ENCODE measurements at regions of chr2 and their contacts with region 1.

Region 1: DNA sequence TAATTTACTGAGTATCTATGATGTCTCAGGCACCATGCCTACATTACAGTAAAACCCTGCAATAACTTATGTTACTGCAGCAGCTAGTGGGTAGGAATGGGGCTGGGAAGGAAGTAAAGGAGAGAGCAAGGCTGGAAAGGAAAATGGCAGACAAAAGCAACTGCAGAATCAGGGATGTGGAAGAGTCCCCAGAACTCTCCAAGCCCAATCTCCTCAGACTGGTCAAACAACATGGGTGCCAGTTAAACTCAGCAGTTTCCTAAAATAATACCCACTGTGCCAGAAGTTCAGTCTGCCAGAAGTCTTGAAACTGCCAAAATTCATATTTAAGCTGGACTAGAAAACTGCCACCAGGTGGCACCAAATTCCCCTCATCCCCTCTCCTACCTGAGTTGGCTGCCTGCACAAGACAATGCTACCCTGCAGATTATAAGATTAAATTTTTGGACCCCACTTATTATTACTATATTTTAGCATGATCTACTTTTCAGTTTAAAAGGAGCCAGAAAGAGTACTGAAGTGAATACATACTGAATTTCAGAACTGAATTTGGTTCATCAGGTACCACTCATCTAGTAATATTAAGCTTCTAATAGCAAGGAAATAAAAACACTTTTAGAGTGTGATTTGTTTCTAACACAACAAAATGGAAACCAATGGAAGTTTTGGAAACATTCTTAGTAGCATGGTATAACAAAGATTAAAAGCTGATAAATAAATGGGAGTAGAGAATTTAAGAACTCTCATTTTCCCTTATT is 86.8 kb upstream of the DNER start:
- DNase-seq: peak in 1 of 2 donors; percentile 78
- H3K4me3 ChIP-seq: no peak overlapping the region
- H3K27ac ChIP-seq: peak overlapping the region in 1 of 2 donors; percentile 1
- H3K4me1 ChIP-seq: peaks cover 3 to 28% of the 10 kb centered on the region in 2 donors
- H3K27me3 ChIP-seq: no peaks in the 10 kb centered on the region
- CTCF ChIP-seq: peak; percentile 45 to 75 (median 72)

Region 2: GRCh38 chr2:229761663-229762062 is 39.5 kb before region 1 on chr2:
- intact Hi-C with region 1: no loop called
- DNase-seq: no peak
- H3K4me3 ChIP-seq: no peak overlapping the region
- H3K27ac ChIP-seq: no peak overlapping the region
- H3K4me1 ChIP-seq: no peaks in the 10 kb centered on the region
- H3K27me3 ChIP-seq: no peaks in the 10 kb centered on the region
- CTCF ChIP-seq: no peak

Region 3: DNA sequence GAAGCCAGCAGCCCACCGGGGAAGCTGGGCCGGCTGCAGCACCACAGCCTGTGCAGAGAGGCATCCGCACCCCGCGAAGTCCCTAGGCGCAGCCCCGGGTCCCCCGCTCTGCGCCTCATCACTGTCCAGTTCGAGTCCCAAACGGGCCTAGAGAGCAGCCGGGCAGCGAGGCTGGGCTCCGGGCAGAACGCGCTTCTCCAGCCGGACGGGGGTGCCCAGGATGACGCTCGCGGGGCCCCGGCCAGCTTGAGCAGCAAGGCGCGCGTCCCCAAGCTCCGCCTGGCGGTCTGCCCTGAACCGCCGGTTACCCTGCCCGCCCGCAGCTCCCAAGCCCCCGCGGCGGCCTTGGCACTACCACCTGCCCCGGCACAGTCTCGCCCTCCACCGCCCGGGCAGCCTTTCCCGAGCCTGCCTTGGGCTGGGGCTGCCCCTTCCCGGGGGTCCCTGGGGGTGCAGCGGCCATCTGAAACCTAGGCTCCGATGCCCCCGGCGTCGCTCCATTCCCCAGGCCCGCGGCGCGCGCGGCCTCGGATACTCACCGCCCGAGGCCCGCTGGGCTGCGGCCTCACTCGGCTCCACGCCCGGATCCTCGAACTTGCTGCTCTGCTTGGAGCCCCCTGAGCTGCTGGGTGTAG is 267.0 kb after region 1 on chr2:
- intact Hi-C with region 1: loop called (anchors 5 kb)
- DNase-seq: peak in 1 of 2 donors; percentile 68
- H3K4me3 ChIP-seq: peak overlapping the region; percentile 47 to 88
- H3K27ac ChIP-seq: peak overlapping the region; percentile 38 to 45
- H3K4me1 ChIP-seq: no peaks in the 10 kb centered on the region
- H3K27me3 ChIP-seq: no peaks in the 10 kb centered on the region
- CTCF ChIP-seq: no peak